ENCODE measurements at regions of chr15 and their contacts with region 1.

Region 1: DNA sequence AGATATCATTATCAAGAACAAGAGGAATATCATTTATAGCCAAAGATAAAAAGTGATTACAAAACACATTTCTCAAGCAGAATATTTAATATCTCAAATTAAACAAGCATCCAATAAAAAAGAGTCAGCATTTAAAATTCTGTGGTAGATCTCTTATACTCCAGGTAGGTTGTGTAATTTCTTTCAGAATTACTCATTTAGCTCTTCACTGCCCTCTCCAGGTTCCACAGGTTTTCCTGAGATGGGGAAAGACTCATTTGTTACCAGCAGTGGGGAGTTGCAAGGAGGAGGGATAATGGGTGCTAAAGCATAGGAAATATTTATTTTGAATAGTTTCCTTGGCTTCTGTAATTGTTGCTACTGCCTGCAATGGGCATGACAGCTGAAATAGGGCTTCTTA is 83.1 kb upstream of the RASGRP1 start:
- DNase-seq: no peak
- CTCF ChIP-seq: no peak

Region 2: DNA sequence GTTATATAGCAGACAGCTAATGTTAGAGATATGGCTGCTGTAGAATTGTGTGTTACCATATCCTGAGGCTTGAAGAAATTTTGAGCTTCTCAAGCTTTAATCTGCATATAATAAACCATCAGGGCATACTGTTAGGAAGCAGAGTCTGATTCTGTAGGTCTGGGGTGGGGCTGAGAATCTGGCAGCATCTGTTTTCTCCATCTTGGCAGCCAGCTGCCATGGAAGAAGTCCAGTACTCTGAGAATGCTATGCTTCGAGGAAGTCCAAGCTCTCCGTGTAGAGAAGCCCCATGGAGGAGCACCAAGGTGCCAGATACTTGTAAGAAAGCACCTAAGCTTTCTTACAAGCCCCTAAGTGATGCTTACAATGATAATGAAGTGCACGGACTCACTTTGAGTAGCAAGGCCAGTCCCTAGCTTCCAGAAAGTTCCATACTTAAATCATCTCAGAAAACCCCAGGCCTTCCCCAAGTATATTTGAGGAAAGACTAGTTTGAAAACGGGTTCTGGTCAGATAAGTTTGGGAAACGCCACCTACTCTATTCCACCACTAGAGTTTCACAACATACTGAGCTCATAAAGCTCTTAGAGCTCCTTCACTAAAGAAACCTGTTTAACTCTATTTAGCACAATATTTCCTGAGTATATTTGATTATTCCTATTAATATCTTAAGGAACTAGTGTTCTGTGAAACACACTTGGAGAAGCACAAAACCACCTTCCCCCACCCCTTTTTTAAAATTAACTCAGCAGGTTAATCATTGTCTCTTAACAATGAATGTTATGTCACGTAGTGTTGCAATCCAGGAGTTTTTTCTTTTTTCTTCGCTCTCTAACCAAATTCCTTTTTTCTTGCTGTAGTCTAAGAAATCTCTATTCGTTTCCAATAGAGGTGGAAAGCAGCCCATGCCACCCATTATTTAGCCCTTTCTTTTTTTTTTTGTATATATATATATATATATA is 23.2 kb before region 1 on chr15:
- CTCF ChIA-PET with region 1: interaction called, 14 read pairs
- POLR2A ChIA-PET with region 1: no interaction called
- DNase-seq: no peak
- CTCF ChIP-seq: no peak

Region 3: DNA sequence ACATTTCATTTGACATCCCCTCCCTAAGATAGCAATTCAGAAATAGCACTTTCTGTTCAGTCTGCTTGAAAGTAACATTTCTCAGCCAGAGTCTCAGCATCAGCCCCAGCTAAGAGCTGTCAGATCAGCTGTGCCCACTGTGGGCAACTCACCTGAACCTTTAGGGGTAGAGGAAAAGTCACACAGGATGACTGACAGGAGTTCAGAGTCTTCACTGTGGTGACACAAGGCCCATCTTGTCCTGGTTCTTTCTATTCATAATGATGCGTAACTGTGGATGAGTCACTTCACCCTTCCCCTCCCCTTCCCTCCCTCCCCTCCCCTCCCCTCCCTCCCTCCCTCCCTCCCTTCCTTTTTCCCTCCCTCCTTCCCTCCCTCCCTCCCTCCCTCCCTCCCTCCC is 13.1 kb after region 1 on chr15:
- CTCF ChIA-PET with region 1: interaction called, 44 read pairs
- POLR2A ChIA-PET with region 1: no interaction called
- DNase-seq: no peak
- CTCF ChIP-seq: no peak

Region 4: GRCh38 chr15:38707802-38708671 is 60.4 kb after region 1 on chr15:
- CTCF ChIA-PET with region 1: no interaction called
- POLR2A ChIA-PET with region 1: no interaction called
- DNase-seq: peak; percentile 52
- CTCF ChIP-seq: peak; percentile 61

Measured in GM10248 (cell line).